ENCODE measurements at regions of chr5 and their contacts with region 1.

Region 1: DNA sequence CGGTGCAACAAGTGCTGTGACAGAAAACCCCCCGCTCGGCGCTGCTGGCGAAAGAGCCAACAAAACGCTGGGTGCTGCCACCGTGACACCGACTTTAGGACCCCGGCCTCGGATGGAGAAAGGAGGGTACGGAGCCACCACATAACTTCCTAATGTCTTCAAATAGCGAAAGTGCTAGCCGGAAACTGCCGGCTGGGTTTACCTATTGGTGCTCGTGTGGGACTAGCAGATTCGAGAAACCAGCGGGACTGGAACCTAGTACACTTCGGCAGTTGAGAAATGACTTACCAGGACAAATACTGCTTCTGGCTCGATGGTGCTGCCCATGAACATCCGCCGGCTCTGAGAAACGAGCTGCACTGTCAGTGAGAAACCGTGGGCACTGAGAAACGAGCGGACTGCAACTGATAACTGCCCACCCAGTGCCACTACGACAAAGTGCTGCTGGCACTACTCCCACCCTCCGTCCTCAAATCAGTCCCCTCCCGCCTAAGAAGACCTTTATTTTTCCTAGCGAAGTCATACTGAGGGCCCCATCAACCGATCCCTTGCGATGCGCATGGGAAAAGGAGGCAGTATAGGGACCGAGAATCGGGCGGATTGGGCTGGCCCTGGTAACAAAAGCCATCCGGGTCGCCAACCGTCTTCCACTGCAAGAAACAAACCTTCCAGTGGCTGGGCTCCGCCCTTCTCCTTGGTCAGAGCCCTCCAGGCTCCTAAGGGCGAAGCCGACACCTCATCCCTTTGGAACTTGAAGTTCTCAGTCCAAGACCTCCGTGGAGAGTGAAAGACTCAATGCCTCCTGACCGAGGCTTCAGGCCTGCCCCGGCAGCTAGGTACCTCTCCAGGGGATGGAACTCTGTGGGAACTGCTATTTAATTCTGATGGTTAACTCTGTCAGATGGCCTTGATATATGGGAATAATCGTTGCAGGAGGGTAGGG is 27.0 kb upstream of the ANXA2R start:
- DNase-seq: peak; percentile 88 to 92 (median 90)
- H3K4me3 ChIP-seq: peak overlapping the region; percentile 97 to 99
- H3K4me3 Mint-ChIP-seq: peak overlapping the region; percentile 97 to 100 (median 98)
- H3K27ac ChIP-seq: peak overlapping the region; percentile 94
- H3K27ac Mint-ChIP-seq: peak overlapping the region; percentile 98 to 100 (median 99)
- H3K4me1 ChIP-seq: peaks cover 46% of the 10 kb centered on the region
- H3K4me1 Mint-ChIP-seq: peaks cover 31 to 59% (median 43%) of the 10 kb centered on the region in 4 donors
- H3K27me3 ChIP-seq: no peaks in the 10 kb centered on the region
- H3K27me3 Mint-ChIP-seq: no peaks in the 10 kb centered on the region

Region 2: DNA sequence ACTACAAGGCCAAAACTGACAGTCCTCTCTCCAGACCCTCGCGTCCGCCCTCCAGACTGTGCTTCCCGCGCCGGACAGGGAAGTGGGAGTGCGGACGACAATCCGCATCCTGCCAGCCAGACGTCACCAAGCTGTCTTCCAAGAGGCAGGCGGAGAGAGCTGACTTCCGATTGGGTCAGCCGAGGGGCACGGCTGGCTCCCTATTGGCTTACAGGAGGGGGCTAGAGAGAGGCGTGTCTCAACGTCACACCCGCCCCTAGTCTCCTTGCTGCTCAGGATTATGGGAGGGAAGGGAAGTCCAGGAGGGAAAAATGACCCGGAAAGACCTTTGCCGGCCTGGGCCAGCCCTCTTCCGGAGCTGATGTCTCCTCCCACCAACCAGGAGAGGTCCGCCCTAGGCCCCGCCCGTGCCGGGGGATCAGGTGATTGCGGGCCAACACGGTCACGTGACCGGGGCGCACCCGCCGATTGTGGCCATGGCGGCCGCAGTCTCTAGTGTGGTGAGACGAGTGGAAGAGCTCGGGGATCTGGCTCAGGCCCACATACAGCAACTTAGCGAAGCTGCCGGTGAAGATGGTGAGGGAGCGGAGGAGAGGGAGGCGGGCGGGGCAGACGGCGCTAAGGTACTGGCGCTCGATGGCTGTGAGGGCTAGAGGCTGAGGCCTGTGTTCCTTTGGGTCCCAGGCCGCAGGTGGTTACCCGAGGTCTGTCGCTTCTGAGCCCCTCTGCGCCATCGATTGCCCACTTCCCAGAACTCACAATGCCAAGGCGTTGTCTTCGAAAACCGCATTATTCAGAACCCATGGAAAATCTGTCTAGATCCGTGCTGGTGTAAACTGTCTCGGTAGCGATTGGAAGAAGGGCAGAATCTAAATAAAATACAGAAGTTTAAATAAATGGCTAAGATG is 1162.9 kb before region 1 on chr5 and contains the start of gene RIMOC1:
- CTCF ChIA-PET with region 1: no interaction called
- POLR2A ChIA-PET with region 1: interaction called, 5 read pairs
- intact Hi-C with region 1: loop called (anchors 5 kb)
- DNase-seq: peak; percentile 96 to 98 (median 98)
- H3K4me3 ChIP-seq: peak within 1 kb of the TSS; percentile 82 to 90
- H3K4me3 Mint-ChIP-seq: peak within 1 kb of the TSS; percentile 93 to 99 (median 98)
- H3K27ac ChIP-seq: peak within 1 kb of the TSS; percentile 74
- H3K27ac Mint-ChIP-seq: peak within 1 kb of the TSS; percentile 96 to 100 (median 97)
- H3K4me1 ChIP-seq: peaks cover 16% of the 10 kb centered on the region
- H3K4me1 Mint-ChIP-seq: peaks cover 22 to 48% (median 29%) of the 10 kb centered on the region in 4 donors
- H3K27me3 ChIP-seq: no peaks in the 10 kb centered on the region
- H3K27me3 Mint-ChIP-seq: peaks cover 0 to 2% of the 10 kb centered on the region in 2 donors
- total RNA-seq, gene RIMOC1: 33.1 to 33.7 TPM

Region 3: DNA sequence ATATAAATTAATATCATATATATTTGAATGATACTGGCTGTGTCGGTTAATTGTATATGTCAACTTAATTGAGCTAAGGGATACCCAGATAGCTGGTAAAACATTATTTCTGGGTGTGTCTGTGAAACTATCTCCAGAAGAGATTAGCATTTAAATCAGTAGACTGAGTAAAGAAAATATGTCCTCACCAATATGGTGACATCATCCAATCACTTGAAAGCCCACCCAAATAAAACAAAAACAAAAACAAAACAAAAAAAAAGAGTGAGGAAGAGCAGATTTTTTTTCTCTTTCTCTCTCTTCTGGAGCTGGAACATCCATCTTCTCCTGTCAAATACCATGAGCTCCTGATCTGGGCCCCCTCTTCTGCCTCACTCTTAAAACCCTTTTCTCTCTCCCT is 326.1 kb before region 1 on chr5:
- CTCF ChIA-PET with region 1: no interaction called
- POLR2A ChIA-PET with region 1: no interaction called
- intact Hi-C with region 1: no loop called
- DNase-seq: no peak
- H3K4me3 ChIP-seq: no peak overlapping the region
- H3K4me3 Mint-ChIP-seq: no peak overlapping the region
- H3K27ac ChIP-seq: no peak overlapping the region
- H3K27ac Mint-ChIP-seq: no peak overlapping the region
- H3K4me1 ChIP-seq: no peaks in the 10 kb centered on the region
- H3K4me1 Mint-ChIP-seq: no peaks in the 10 kb centered on the region
- H3K27me3 ChIP-seq: no peaks in the 10 kb centered on the region
- H3K27me3 Mint-ChIP-seq: no peaks in the 10 kb centered on the region

Region 4: GRCh38 chr5:42994246-42995151 is 72.6 kb before region 1 on chr5:
- CTCF ChIA-PET with region 1: interaction called, 30 read pairs
- POLR2A ChIA-PET with region 1: interaction called, 367 read pairs
- intact Hi-C with region 1: loop called (anchors 1 kb)
- DNase-seq: peak; percentile 86 to 89 (median 88)
- H3K4me3 ChIP-seq: peak overlapping the region; percentile 72 to 76
- H3K4me3 Mint-ChIP-seq: peak overlapping the region; percentile 93 to 100 (median 100)
- H3K27ac ChIP-seq: peak overlapping the region; percentile 93
- H3K27ac Mint-ChIP-seq: peak overlapping the region; percentile 98 to 100 (median 100)
- H3K4me1 ChIP-seq: peaks cover 34% of the 10 kb centered on the region
- H3K4me1 Mint-ChIP-seq: peaks cover 14 to 69% (median 26%) of the 10 kb centered on the region in 4 donors
- H3K27me3 ChIP-seq: no peaks in the 10 kb centered on the region
- H3K27me3 Mint-ChIP-seq: no peaks in the 10 kb centered on the region

Region 5: GRCh38 chr5:43019614-43020293 is 47.3 kb before region 1 on chr5:
- CTCF ChIA-PET with region 1: interaction called, 33 read pairs
- POLR2A ChIA-PET with region 1: interaction called, 332 read pairs
- intact Hi-C with region 1: loop called (anchors 1 kb)
- DNase-seq: peak; percentile 84 to 94 (median 91)
- H3K4me3 ChIP-seq: peak overlapping the region; percentile 73 to 83
- H3K4me3 Mint-ChIP-seq: peak overlapping the region; percentile 94 to 99 (median 98)
- H3K27ac ChIP-seq: peak overlapping the region; percentile 94
- H3K27ac Mint-ChIP-seq: peak overlapping the region; percentile 99 to 100 (median 100)
- H3K4me1 ChIP-seq: peaks cover 40% of the 10 kb centered on the region
- H3K4me1 Mint-ChIP-seq: peaks cover 24 to 67% (median 34%) of the 10 kb centered on the region in 4 donors
- H3K27me3 ChIP-seq: no peaks in the 10 kb centered on the region
- H3K27me3 Mint-ChIP-seq: no peaks in the 10 kb centered on the region

Region 6: GRCh38 chr5:43049236-43049635 is 17.8 kb before region 1 on chr5:
- CTCF ChIA-PET with region 1: interaction called, 8 read pairs
- POLR2A ChIA-PET with region 1: interaction called, 689 read pairs
- intact Hi-C with region 1: no loop called
- DNase-seq: no peak
- H3K4me3 ChIP-seq: no peak overlapping the region
- H3K4me3 Mint-ChIP-seq: no peak overlapping the region
- H3K27ac ChIP-seq: no peak overlapping the region
- H3K27ac Mint-ChIP-seq: no peak overlapping the region
- H3K4me1 ChIP-seq: peaks cover 13% of the 10 kb centered on the region
- H3K4me1 Mint-ChIP-seq: peaks cover 15 to 19% (median 17%) of the 10 kb centered on the region in 4 donors
- H3K27me3 ChIP-seq: no peaks in the 10 kb centered on the region
- H3K27me3 Mint-ChIP-seq: no peaks in the 10 kb centered on the region

Region 7: DNA sequence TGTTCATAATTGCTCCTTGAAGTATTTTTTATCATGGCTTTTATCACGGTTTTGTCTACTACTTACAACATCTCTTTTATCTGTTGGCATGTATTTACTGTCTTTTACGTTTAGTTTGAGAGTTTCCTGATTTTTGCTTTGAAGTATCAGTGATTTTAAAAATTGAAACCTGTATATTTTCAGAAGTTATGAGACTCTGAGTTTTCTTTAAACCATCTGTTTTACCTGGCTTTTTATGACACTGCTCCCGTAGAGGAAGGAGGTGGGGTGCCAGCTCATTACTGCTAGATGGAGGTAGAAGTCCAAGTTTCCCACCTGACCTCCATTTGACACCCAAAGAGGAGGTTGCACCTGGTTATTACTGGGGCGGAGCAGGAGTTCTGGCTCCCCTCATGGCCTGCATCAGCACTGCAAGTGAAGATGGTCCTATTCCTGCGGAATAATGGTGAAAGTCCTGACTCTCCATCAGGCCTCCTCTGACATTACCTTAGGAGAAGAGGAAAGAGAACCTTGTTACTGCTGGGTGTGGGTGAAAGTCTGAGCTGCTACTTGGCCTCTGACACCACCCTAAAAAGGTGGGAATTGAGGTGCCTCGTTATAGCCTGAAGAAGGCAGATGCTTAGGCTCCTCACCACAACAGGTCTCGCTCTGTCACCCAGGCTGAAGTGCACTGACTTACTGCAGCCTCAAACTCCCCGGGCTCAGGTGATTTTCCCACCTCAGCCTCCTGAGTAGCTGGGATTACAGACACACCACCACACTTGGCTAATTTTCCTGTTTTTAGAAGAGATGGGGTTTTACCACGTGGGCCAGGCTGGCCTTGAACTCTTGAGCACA is 43.8 kb after region 1 on chr5:
- CTCF ChIA-PET with region 1: interaction called, 15 read pairs
- POLR2A ChIA-PET with region 1: interaction called, 34 read pairs
- intact Hi-C with region 1: no loop called
- DNase-seq: peak in 4 of 5 donors; percentile 26 to 55 (median 40)
- H3K4me3 ChIP-seq: no peak overlapping the region
- H3K4me3 Mint-ChIP-seq: peak overlapping the region; percentile 18 to 79 (median 62)
- H3K27ac ChIP-seq: peak overlapping the region; percentile 36
- H3K27ac Mint-ChIP-seq: peak overlapping the region; percentile 63 to 91 (median 87)
- H3K4me1 ChIP-seq: peaks cover 32% of the 10 kb centered on the region
- H3K4me1 Mint-ChIP-seq: peaks cover 17 to 34% (median 24%) of the 10 kb centered on the region in 4 donors
- H3K27me3 ChIP-seq: no peaks in the 10 kb centered on the region
- H3K27me3 Mint-ChIP-seq: no peaks in the 10 kb centered on the region

Measured in CD4-positive, alpha-beta memory T cell (primary cell).